CD8-positive, alpha-beta memory T cell (primary cell): ENCODE measurements at regions of chr7 and their contacts with region 1.

Region 1: GRCh38 chr7:150356265-150356897 is 12.2 kb upstream of the REPIN1 start:
- DNase-seq: peak in 2 of 5 donors; percentile 45 to 59
- H3K4me3 ChIP-seq: no peak overlapping the region
- H3K4me3 Mint-ChIP-seq: peak overlapping the region in 1 of 7 donors; percentile 41
- H3K27ac ChIP-seq: no peak overlapping the region
- H3K27ac Mint-ChIP-seq: peak overlapping the region in 5 of 8 donors; percentile 11 to 81 (median 58)
- H3K4me1 ChIP-seq: peaks cover 27% of the 10 kb centered on the region
- H3K4me1 Mint-ChIP-seq: peaks cover 32 to 42% (median 37%) of the 10 kb centered on the region in 3 donors
- H3K27me3 ChIP-seq: no peaks in the 10 kb centered on the region
- H3K27me3 Mint-ChIP-seq: no peaks in the 10 kb centered on the region

Region 2: DNA sequence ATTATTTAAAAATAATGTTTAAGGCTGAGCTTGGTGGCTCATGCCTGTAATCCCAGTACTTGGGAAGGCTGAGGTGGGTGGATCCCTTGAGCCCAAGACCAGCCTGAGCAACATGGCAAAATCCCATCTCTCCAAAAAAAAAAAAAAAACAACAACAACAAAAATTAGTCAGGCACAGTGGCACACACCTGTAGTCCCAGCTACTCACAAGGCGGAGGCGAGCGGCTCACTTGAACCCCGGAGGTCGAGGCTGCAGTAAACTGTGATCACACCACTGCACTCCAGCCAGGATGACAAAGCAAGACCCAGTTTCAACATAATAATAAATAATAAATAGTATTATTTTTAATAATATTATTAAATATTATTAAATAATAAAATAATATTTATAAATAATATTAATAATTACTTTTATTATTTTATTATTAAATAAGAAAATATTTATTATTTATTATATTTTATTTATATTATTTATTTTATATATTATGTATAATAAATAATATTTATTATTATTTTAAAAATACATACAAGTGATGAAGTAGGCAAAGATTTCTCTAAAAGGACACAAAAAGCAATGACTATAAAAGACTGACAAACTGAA is 41.6 kb before region 1 on chr7:
- CTCF ChIA-PET with region 1: no interaction called
- POLR2A ChIA-PET with region 1: interaction called, 10 read pairs
- DNase-seq: no peak
- H3K4me3 ChIP-seq: no peak overlapping the region
- H3K4me3 Mint-ChIP-seq: no peak overlapping the region
- H3K27ac ChIP-seq: peak overlapping the region; percentile 90
- H3K27ac Mint-ChIP-seq: no peak overlapping the region
- H3K4me1 ChIP-seq: no peaks in the 10 kb centered on the region
- H3K4me1 Mint-ChIP-seq: peaks cover 0 to 5% (median 0%) of the 10 kb centered on the region in 3 donors
- H3K27me3 ChIP-seq: no peaks in the 10 kb centered on the region
- H3K27me3 Mint-ChIP-seq: peaks cover 0 to 1% of the 10 kb centered on the region in 2 donors

Region 3: GRCh38 chr7:150404805-150405583 is 48.6 kb after region 1 on chr7:
- CTCF ChIA-PET with region 1: interaction called, 15 read pairs
- POLR2A ChIA-PET with region 1: interaction called, 4 read pairs
- DNase-seq: peak; percentile 63 to 84 (median 75)
- H3K4me3 ChIP-seq: peak overlapping the region; percentile 86
- H3K4me3 Mint-ChIP-seq: peak overlapping the region; percentile 83 to 99 (median 97)
- H3K27ac ChIP-seq: peak overlapping the region; percentile 93
- H3K27ac Mint-ChIP-seq: peak overlapping the region; percentile 89 to 100 (median 98)
- H3K4me1 ChIP-seq: peaks cover 32% of the 10 kb centered on the region
- H3K4me1 Mint-ChIP-seq: peaks cover 30 to 44% (median 42%) of the 10 kb centered on the region in 3 donors
- H3K27me3 ChIP-seq: no peaks in the 10 kb centered on the region
- H3K27me3 Mint-ChIP-seq: no peaks in the 10 kb centered on the region

Region 4: GRCh38 chr7:150420987-150421674 is 64.8 kb after region 1 on chr7:
- CTCF ChIA-PET with region 1: interaction called, 13 read pairs
- POLR2A ChIA-PET with region 1: no interaction called
- DNase-seq: peak; percentile 71 to 86 (median 79)
- H3K4me3 ChIP-seq: no peak overlapping the region
- H3K4me3 Mint-ChIP-seq: peak overlapping the region in 5 of 7 donors; percentile 1 to 67 (median 39)
- H3K27ac ChIP-seq: no peak overlapping the region
- H3K27ac Mint-ChIP-seq: peak overlapping the region in 3 of 8 donors; percentile 43 to 71 (median 71)
- H3K4me1 ChIP-seq: peaks cover 4% of the 10 kb centered on the region
- H3K4me1 Mint-ChIP-seq: peaks cover 5 to 7% (median 6%) of the 10 kb centered on the region in 3 donors
- H3K27me3 ChIP-seq: no peaks in the 10 kb centered on the region
- H3K27me3 Mint-ChIP-seq: peaks cover 0 to 4% of the 10 kb centered on the region in 2 donors